Heart left ventricle (tissue), 16 donors: ENCODE measurements at regions of chr19 and their contacts with region 1.

Region 1: DNA sequence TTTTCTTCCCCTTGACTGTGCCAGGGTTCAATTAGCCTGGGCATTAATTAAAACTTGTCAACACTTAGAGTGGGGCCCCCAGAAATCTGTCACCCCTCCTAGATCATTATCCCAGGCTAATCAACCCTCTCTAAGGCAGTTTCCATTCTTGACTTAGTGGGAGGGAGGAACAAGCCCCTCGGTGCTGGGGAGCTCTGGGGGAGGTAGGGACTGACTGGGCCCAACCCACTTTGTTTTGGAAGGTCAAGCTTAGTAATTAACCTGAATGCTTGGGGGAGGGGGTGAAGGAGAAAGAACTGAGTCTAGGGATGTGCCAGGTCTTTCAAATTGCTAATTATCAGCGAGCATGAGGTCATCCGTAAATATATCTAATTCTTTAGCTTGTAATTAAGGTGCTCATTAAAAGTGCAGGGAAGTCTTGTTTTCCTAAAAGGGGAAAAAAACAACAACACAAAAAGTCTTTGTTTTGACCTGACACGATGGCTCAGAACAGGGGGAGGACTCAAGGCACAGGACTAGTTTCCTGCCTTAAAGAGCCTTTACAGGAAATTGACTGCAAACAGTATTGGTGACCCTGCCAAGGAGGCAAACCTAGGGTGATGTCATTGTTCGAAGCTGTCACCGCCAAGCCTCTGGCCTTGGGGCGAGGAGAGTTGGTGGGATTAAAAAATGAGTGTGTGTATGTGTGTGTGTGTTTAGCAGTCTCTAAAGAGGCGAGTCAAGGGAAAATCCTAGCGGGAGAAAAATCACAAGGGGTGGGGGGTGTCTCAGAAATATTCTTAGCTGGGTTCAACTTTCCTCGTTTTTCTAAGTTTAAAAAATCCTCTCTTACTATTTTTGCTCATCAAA is 19.4 kb downstream of the ACTN4 start:
- DNase-seq: peak in 4 of 5 donors; percentile 59 to 75 (median 70)
- ATAC-seq: peak in 3 of 4 donors; percentile 29 to 52 (median 48)
- H3K4me3 ChIP-seq: peak overlapping the region in 1 of 12 donors; percentile 19
- H3K27ac ChIP-seq: peak overlapping the region; percentile 88 to 99 (median 96)
- H3K4me1 ChIP-seq: peaks cover 57 to 100% (median 100%) of the 10 kb centered on the region in 12 donors
- H3K27me3 ChIP-seq: no peaks in the 10 kb centered on the region
- CTCF ChIP-seq: no peak
- POLR2A ChIP-seq: no peak

Region 2: DNA sequence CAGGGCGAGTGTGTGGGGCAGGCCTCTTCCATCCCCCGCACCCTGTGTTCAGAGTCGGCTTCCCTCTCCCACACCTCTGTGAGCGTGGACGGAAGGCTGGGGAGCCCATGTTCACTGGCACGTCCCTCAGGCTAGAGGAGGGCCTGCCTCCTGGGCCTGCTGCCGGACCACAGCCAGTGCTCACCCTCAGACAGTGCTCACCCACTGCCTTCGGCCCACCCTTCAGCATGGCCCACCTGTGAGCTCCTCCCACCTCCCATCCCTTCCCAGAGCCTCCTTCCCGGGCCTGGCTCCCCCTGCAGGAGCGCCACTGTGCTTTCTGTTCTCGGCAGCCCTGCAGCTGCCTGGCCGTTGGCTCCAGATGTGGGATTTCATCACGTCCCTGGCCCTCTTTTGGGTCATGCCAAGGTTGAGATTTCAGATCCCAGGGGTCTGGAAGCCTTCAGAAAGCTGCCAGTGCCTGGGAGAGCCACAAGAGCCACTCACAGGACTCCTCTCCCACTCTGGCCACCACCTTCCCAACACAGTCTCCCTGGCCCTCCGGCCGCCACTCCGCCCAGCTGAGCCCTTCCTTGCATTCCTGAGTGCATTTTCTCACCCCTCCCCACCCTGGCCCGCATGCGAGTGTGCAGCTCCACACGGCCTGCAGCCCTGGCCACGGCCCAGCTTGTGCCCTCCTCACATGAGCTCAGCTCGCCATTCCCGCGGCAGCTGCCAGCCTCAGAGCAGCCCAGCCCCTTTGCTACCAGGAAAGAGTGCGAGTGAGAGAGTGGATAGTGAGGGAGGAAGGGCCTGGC is 52.1 kb after region 1 on chr19:
- intact Hi-C with region 1: loop called in 1 of 10 experiments (anchors 2 kb)
- DNase-seq: peak; percentile 70 to 88 (median 83)
- ATAC-seq: peak; percentile 28 to 56 (median 44)
- H3K4me3 ChIP-seq: no peak overlapping the region
- H3K27ac ChIP-seq: peak overlapping the region; percentile 60 to 98 (median 89)
- H3K4me1 ChIP-seq: peaks cover 22 to 96% (median 68%) of the 10 kb centered on the region in 12 donors
- H3K27me3 ChIP-seq: no peaks in the 10 kb centered on the region
- CTCF ChIP-seq: peak; percentile 17 to 59 (median 40)
- POLR2A ChIP-seq: peak in 1 of 2 donors; percentile 11

Region 3: DNA sequence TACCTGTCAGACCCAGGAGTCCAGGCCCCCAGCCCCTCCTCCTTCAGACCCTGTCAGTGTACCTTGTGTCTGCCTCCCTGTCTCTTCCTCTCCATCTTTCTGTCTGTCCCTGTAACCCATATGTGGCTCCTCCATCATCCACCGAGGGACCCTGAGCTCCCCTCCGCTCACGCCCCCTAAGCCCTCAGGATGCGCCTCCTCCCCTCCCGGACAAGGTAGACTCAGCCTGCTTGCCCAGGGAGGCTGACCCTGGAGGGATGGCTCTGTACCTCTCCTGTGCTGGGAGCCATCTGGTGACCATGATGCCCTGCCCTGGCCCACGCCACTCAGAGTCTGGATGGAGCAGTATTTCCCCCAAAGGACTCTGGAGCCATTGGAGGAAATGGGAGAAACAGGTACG is 78.4 kb after region 1 on chr19:
- intact Hi-C with region 1: no loop called
- DNase-seq: no peak
- ATAC-seq: no peak
- H3K4me3 ChIP-seq: no peak overlapping the region
- H3K27ac ChIP-seq: no peak overlapping the region
- H3K4me1 ChIP-seq: no peaks in the 10 kb centered on the region
- H3K27me3 ChIP-seq: no peaks in the 10 kb centered on the region
- CTCF ChIP-seq: no peak
- POLR2A ChIP-seq: no peak